ENCODE measurements at regions of chr1 and their contacts with region 1.

Region 1: DNA sequence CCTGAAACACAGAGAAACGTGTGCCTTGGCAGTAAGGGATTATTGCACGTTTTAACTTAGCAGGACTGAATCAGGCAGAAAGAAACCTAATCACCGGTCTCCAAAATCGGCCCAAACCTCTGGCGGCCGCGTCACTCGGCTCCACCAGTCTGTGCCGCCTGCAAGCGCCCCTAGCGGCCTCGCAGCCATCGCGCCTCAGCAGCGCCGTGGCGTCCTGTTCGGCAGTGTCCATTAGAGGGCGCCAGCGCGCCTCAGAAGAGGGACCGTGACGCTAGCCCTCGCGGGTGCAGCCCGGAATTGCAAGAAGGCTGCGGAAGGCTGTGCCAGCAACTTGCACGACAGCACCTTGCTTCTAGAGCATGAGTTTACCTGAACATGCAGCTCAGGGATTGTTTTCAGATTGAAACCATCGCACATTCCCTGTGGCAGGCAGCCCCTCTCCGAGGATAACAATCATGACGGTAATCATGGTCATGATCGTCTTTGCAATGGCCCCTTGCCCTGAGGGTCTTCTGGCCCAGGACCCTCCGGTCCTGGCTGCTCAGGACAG is 164.4 kb downstream of the TRIM33 start:
- DNase-seq: peak; percentile 93 to 97
- ATAC-seq: peak; percentile 98 to 99 (median 98)
- H3K4me3 ChIP-seq: peak overlapping the region; percentile 44 to 65 (median 56)
- H3K27ac ChIP-seq: peak overlapping the region in 9 of 10 donors; percentile 36 to 87 (median 74)
- H3K4me1 ChIP-seq: peaks cover 2 to 24% (median 9%) of the 10 kb centered on the region in 9 donors
- H3K27me3 ChIP-seq: no peaks in the 10 kb centered on the region
- CTCF ChIP-seq: peak in 7 of 9 donors; percentile 100

Region 2: GRCh38 chr1:114428083-114428749 is 81.7 kb after region 1 on chr1:
- intact Hi-C with region 1: loop called in 7 of 10 experiments (anchors 2 to 10 kb)
- DNase-seq: no peak
- ATAC-seq: peak in 1 of 8 donors; percentile 12
- H3K4me3 ChIP-seq: no peak overlapping the region
- H3K27ac ChIP-seq: peak overlapping the region in 2 of 10 donors; percentile 4 to 15
- H3K4me1 ChIP-seq: peaks cover 0 to 19% (median 5%) of the 10 kb centered on the region in 9 donors
- H3K27me3 ChIP-seq: no peaks in the 10 kb centered on the region
- CTCF ChIP-seq: peak in 8 of 9 donors; percentile 18 to 61 (median 51)

Region 3: GRCh38 chr1:114558544-114558943 is 212.0 kb after region 1 on chr1:
- intact Hi-C with region 1: loop called in 9 of 10 experiments (anchors 5 to 10 kb)
- DNase-seq: no peak
- ATAC-seq: no peak
- H3K4me3 ChIP-seq: no peak overlapping the region
- H3K27ac ChIP-seq: no peak overlapping the region
- H3K4me1 ChIP-seq: no peaks in the 10 kb centered on the region
- H3K27me3 ChIP-seq: no peaks in the 10 kb centered on the region
- CTCF ChIP-seq: peak in 8 of 9 donors; percentile 12 to 55 (median 48)

Region 4: GRCh38 chr1:114670083-114671010 is 323.8 kb after region 1 on chr1:
- intact Hi-C with region 1: loop called in 2 of 10 experiments (anchors 5 to 10 kb)
- DNase-seq: peak; percentile 96
- ATAC-seq: peak; percentile 99 to 100 (median 100)
- H3K4me3 ChIP-seq: peak overlapping the region; percentile 57 to 93 (median 83)
- H3K27ac ChIP-seq: peak overlapping the region in 9 of 10 donors; percentile 44 to 85 (median 79)
- H3K4me1 ChIP-seq: peaks cover 0 to 19% (median 9%) of the 10 kb centered on the region in 9 donors
- H3K27me3 ChIP-seq: peaks cover 0 to 4% (median 0%) of the 10 kb centered on the region in 7 donors
- CTCF ChIP-seq: peak in 8 of 9 donors; percentile 7 to 38 (median 28)

Region 5: GRCh38 chr1:114757455-114758250 is 411.1 kb after region 1 on chr1 and contains the start of gene CSDE1:
- intact Hi-C with region 1: loop called in 1 of 10 experiments (anchors 5 kb)
- DNase-seq: peak; percentile 95 to 98
- ATAC-seq: peak; percentile 97 to 99 (median 98)
- H3K4me3 ChIP-seq: peak within 1 kb of the TSS; percentile 70 to 97 (median 92)
- H3K27ac ChIP-seq: peak within 1 kb of the TSS; percentile 92 to 100 (median 98)
- H3K4me1 ChIP-seq: peaks cover 3 to 52% (median 45%) of the 10 kb centered on the region in 9 donors
- H3K27me3 ChIP-seq: no peaks in the 10 kb centered on the region
- CTCF ChIP-seq: peak in 7 of 9 donors; percentile 37 to 64 (median 42)
- total RNA-seq, gene CSDE1: 720 to 1,012 (median 916) TPM

Region 6: GRCh38 chr1:115771847-115772457 is 1425.4 kb after region 1 on chr1:
- intact Hi-C with region 1: no loop called
- DNase-seq: peak; percentile 37 to 77
- ATAC-seq: peak; percentile 73 to 87 (median 76)
- H3K4me3 ChIP-seq: peak overlapping the region in 6 of 10 donors; percentile 11 to 30 (median 15)
- H3K27ac ChIP-seq: peak overlapping the region in 9 of 10 donors; percentile 17 to 79 (median 68)
- H3K4me1 ChIP-seq: peaks cover 0 to 28% (median 7%) of the 10 kb centered on the region in 9 donors
- H3K27me3 ChIP-seq: peaks cover 0 to 7% (median 0%) of the 10 kb centered on the region in 7 donors
- CTCF ChIP-seq: peak; percentile 42 to 85 (median 75)

Measured in heart right ventricle (tissue), 16 donors.